GM12878 (cell line): ENCODE measurements at regions of chr19 and their contacts with region 1.

Region 1: GRCh38 chr19:19179548-19180441 is 9.7 kb upstream of the MEF2B start:
- DNase-seq: no peak
- ATAC-seq: no peak; the same call in 2 of the 3 replicates
- H3K4me3 ChIP-seq: no peak overlapping the region
- H3K27ac ChIP-seq: no peak overlapping the region
- H3K4me1 ChIP-seq: peaks cover 3% of the 10 kb centered on the region; the same call in 1 of the 2 replicates
- H3K27me3 ChIP-seq: no peaks in the 10 kb centered on the region
- CTCF ChIP-seq: no peak
- EP300 ChIP-seq: no peak
- POLR2A ChIP-seq: no peak
- RAD21 ChIP-seq: no peak

Region 2: DNA sequence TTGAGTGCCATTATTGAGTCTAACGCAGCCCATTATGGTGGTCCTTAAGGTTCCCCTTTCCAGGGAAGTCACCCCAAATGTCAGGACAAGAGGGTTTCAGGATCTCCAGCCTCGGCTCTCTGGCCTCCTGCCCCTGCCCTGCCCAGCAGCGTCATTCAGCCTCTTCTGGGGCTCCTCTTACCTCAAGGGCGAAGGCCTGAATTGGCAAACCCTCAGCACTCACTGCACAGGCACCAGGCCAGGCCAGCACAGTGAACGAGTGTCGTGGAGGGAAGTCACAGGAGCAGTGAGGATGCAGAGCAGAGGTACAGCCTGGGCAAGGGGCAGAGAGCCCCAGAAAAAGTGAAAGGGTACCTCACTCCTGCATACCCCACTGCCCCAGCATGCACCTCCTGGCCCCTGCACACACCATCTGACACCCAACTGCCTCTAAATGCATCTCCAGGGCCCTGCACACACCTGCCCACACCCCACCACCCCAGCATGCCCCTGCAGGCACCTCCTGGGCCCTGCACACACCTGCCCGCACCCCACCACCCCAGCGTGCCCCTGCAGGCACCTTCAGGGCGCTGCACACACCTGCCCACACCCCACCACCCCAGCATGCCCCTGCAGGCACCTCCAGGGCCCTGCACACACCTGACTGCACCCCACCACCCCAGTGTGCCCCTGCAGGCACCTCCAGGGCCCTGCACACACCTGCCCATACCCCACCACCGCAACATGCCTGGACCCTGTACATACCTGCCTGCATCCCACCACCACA is 96.2 kb before region 1 on chr19:
- CTCF ChIA-PET with region 1: no interaction called
- POLR2A ChIA-PET with region 1: no interaction called
- RAD21 ChIA-PET with region 1: no interaction called
- SMC1A ChIA-PET with region 1: no interaction called
- in situ Hi-C with region 1: no loop called
- intact Hi-C with region 1: no loop called
- DNase-seq: no peak
- ATAC-seq: no peak
- H3K4me3 ChIP-seq: no peak overlapping the region
- H3K27ac ChIP-seq: no peak overlapping the region
- H3K4me1 ChIP-seq: peaks cover 11% of the 10 kb centered on the region
- H3K27me3 ChIP-seq: no peaks in the 10 kb centered on the region
- CTCF ChIP-seq: no peak
- EP300 ChIP-seq: no peak
- POLR2A ChIP-seq: no peak
- RAD21 ChIP-seq: no peak

Region 3: GRCh38 chr19:19138169-19138981 is 41.4 kb before region 1 on chr19 and contains the start of gene TMEM161A:
- CTCF ChIA-PET with region 1: interaction called, 76 read pairs
- POLR2A ChIA-PET with region 1: no interaction called
- RAD21 ChIA-PET with region 1: interaction called, 39 read pairs
- SMC1A ChIA-PET with region 1: interaction called, 24 read pairs
- in situ Hi-C with region 1: loop called (anchors 5 kb)
- intact Hi-C with region 1: no loop called
- DNase-seq: peak; percentile 98
- ATAC-seq: peak; percentile 100
- H3K4me3 ChIP-seq: peak within 1 kb of the TSS; percentile 77
- H3K27ac ChIP-seq: peak within 1 kb of the TSS; percentile 76
- H3K4me1 ChIP-seq: peaks cover 6% of the 10 kb centered on the region; the same call in 1 of the 2 replicates
- H3K27me3 ChIP-seq: no peaks in the 10 kb centered on the region
- CTCF ChIP-seq: no peak
- EP300 ChIP-seq: no peak
- POLR2A ChIP-seq: peak; percentile 90
- RAD21 ChIP-seq: no peak
- polyA plus RNA-seq, gene TMEM161A: 1.1 to 2.0 TPM

Region 4: DNA sequence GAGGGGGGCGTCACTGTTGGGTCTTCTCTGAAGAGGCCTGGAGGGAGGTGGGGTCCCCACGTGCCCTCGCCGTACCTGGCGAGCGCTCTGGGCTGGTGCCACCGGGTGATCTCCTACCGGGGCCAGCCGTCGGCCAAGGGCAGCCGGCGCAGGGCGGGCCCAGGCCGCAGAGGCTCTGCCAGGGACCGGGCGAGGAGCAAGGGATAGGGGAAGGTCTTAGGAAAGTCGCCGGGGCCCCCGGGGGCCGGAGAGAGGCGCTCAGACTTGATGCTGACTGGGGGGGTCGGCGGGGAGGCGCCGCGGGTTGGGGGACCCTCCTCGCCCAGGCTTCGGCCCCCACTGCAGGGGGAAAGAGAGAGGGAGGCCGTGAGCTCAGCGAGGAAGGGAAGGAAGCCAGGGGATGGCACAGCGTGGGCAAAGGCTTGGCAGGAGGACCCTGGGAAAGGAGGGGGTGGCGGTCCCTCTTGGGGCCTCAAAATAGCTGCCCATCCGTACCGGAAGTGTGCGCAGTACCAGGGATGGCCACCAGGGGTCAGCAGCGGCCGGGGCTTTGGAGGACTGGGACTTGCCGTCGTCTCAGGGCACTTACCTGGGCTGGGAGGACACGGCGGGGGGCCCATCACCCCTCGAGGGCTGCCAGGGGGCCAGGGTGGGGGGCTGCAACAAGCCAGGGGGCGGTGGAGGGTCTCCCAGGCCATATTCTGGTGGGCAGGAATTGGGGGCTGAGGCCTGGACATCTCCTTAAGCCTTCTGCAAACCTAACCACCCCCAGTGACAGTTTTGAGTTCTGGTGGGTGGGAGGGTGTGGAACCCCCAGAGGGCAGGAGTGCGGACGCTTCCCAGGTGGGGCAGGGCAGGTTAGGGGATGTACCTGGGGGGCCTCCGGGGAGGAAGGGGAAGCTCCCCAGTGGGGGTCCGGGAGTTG is 33.8 kb before region 1 on chr19:
- CTCF ChIA-PET with region 1: interaction called, 207 read pairs
- POLR2A ChIA-PET with region 1: interaction called, 7 read pairs
- RAD21 ChIA-PET with region 1: interaction called, 394 read pairs
- SMC1A ChIA-PET with region 1: interaction called, 114 read pairs
- in situ Hi-C with region 1: loop called (anchors 5 kb)
- intact Hi-C with region 1: loop called (anchors 1 kb)
- DNase-seq: no peak
- ATAC-seq: peak; percentile 97
- H3K4me3 ChIP-seq: no peak overlapping the region
- H3K27ac ChIP-seq: no peak overlapping the region
- H3K4me1 ChIP-seq: 0 out of 2 replicates have a peak, but pooled peaks cover 3% of the 10 kb centered on the region
- H3K27me3 ChIP-seq: no peaks in the 10 kb centered on the region
- CTCF ChIP-seq: peak; percentile 89 to 98 (median 94)
- EP300 ChIP-seq: no peak
- POLR2A ChIP-seq: peak; percentile 36; the same call in 1 of the 2 replicates
- RAD21 ChIP-seq: peak; percentile 98